Posterior vena cava (tissue), 2 donors: ENCODE measurements at regions of chrX and their contacts with region 1.

Region 1: DNA sequence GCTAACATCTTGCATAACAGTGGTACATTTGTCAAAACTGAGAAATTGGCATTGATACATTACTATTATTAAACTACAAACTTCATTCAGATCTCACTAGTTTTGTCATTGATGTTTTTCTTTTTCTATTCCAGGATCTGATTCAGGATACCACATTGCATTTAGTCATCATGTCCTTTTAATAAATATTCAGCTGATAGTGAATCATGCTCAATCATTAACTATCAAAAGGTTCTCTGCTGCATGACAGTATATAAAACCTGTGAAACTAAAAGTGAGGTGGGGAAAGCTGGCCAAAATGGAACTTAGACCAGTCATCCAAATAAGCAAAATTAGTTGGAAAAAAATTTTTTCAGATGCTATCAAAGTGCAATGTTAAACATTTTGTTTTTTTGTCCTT is 28.1 kb upstream of the HS6ST2 start:
- DNase-seq: no peak

Region 2: GRCh38 chrX:132876523-132877338 is 109.8 kb before region 1 on chrX:
- intact Hi-C with region 1: no loop called
- DNase-seq: no peak

Region 3: GRCh38 chrX:133045986-133046385 is 59.4 kb after region 1 on chrX:
- intact Hi-C with region 1: loop called in 1 of 2 experiments (anchors 2 kb)
- DNase-seq: no peak